ENCODE measurements at regions of chr2 and their contacts with region 1.

Region 1: DNA sequence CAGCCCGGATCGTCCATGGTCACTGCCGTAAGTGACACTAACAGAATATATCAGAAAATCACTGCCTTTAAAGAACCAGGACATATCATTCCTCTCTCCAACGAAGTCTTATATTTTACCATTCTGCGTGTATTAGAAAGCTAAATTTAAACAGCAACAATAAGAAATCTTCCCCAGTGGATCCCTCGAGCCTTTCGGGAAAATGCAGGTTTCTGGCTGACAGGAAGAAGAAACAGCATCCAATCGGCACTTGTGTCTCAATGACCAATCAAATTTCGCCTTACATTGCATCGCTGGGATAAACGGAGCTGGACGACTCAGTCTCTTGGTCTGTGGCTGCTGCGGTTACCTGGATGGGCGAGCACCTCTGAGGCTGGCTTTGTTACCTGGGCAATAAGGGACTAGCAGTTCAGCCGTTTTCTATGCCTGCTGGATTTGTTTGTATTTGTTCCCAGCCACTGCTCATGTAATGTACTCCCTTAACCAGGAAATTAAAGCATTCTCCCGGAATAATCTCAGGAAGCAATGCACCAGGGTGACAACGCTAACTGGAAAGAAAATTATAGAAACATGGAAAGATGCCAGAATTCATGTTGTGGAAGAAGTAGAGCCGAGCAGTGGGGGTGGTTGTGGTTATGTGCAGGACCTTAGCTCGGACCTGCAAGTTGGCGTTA is at the start of gene DUSP19:
- DNase-seq: peak; percentile 73 to 89 (median 82)
- ATAC-seq: peak; percentile 94 to 95
- H3K4me3 ChIP-seq: peak within 1 kb of the TSS; percentile 88
- H3K27ac ChIP-seq: peak within 1 kb of the TSS; percentile 91
- H3K4me1 ChIP-seq: no peaks in the 10 kb centered on the region
- H3K27me3 ChIP-seq: no peaks in the 10 kb centered on the region
- total RNA-seq, gene DUSP19: 7.5 to 16.6 (median 12.3) TPM

Region 2: GRCh38 chr2:182994228-182994912 is 84.2 kb before region 1 on chr2:
- intact Hi-C with region 1: no loop called
- DNase-seq: no peak
- ATAC-seq: no peak
- H3K4me3 ChIP-seq: no peak overlapping the region
- H3K27ac ChIP-seq: no peak overlapping the region
- H3K4me1 ChIP-seq: no peaks in the 10 kb centered on the region
- H3K27me3 ChIP-seq: no peaks in the 10 kb centered on the region

Region 3: GRCh38 chr2:183038341-183039300 is 40.0 kb before region 1 on chr2 and contains the start of gene NCKAP1:
- intact Hi-C with region 1: loop called in 2 of 4 experiments (anchors 5 kb)
- DNase-seq: peak; percentile 92 to 97 (median 96)
- ATAC-seq: peak; percentile 90 to 93
- H3K4me3 ChIP-seq: peak within 1 kb of the TSS; percentile 100
- H3K27ac ChIP-seq: peak within 1 kb of the TSS; percentile 100
- H3K4me1 ChIP-seq: no peaks in the 10 kb centered on the region
- H3K27me3 ChIP-seq: no peaks in the 10 kb centered on the region
- total RNA-seq, gene NCKAP1: 131 to 158 (median 140) TPM

Region 4: GRCh38 chr2:183124222-183124956 is 45.8 kb after region 1 on chr2 and contains the start of gene NUP35:
- intact Hi-C with region 1: loop called in 1 of 4 experiments (anchors 5 kb)
- DNase-seq: peak; percentile 78 to 92 (median 89)
- ATAC-seq: peak; percentile 99
- H3K4me3 ChIP-seq: peak within 1 kb of the TSS; percentile 88
- H3K27ac ChIP-seq: peak within 1 kb of the TSS; percentile 95
- H3K4me1 ChIP-seq: no peaks in the 10 kb centered on the region
- H3K27me3 ChIP-seq: no peaks in the 10 kb centered on the region
- total RNA-seq, gene NUP35: 5.5 to 10.7 (median 9.5) TPM

Measured in right cardiac atrium (tissue), 5 donors.